Activated T-helper 2 cell treated with anti-CD3 and anti-CD28 coated beads, Interferon-gamma antibody, Interleukin-2, Interleukin-4, amounts not matched to agents 10 μg/mL and 5 μg/mL and 100 μg/mL, durations not matched to agents 14 hours and 24 hours and 36 hours (primary cell): ENCODE measurements at regions of chr17 and their contacts with region 1.

Region 1: DNA sequence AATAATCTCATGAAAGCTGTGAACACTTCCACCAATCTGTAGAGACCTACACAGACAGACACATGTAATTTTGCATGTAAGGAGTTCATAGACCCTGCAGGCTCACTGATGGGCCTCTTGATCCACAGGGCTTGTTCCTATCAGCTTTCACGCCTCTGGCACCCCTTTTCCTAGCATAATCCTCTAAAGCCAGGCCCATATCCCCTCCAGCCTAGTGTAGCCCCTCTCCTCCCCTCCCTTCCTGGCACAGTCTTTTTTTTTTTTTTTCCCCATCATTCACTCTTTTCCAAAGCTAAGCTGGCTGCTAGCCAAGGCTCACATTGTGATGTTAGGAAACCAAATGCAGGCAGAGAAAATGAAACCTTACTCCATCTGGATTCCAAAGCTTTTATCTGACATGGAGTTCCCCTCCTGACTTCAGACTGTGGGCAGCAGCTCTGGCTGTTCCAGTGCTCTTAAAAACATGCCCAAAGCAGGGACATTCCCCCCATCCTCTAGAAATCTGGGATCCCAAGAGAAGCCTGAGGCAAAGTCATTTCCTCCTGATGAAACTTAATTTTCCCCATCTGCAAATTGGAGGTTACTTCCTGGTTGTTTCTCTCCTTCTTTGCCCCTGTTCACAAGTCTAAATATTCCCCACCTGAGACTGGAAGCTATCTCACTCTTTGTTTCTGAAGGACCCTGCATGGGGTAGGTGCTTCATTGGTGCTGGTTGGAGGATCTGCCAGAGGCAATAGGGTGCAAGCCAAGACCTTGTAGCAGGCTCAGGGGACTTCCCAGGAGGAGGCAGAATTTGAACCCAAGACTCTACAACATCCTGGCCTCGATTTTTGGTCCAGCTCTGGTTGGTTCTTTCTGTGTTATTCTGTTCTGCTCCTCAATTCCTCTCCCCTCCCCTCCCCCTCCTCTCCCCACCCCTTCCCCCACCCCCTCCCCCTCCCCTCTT is 9.9 kb upstream of the CCL5 start:
- DNase-seq: no peak
- H3K4me3 Mint-ChIP-seq: no peak overlapping the region
- H3K27ac Mint-ChIP-seq: peak overlapping the region; percentile 51
- H3K4me1 Mint-ChIP-seq: peaks cover 42% of the 10 kb centered on the region
- H3K27me3 Mint-ChIP-seq: no peaks in the 10 kb centered on the region

Region 2: DNA sequence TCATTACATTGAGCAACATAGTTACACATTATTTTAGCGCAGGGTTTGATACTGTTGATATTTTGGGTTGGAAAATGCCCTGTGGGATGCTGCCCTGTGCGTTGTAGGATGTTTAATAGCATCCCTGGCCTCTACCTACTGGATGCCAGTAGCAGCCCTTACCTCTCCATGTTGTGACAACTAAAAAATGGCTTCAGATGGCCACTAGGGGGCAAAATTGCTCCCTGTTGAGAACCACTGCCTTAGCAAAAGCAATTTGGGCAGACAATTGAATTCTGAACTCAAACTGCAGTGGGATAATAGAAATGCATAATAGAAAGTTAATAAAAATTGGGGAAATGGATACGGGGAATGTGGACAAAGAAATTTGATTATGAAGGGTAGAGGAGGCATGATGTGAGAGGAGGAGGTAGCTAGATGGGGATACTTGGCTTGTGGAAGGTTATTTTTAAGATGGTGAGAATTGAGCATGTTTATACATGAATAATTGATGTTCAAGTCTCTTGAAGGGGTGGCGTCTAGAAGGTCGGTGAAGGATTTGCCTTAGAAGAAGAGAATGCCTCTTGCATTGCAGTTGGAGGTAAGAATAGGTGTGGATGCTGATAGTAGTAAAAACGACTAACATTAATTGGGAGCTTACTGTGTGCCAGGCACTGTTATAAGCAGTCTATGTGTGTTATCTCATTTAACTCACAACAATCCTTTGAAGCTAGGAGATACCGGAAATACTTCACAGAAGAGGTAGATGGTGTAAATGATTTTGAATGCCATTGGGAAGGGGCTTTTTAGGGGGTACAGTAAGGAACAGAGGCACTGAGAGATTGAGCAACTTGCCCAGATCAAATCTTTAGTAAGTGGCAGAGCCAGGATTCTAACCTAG is 40.4 kb before region 1 on chr17:
- intact Hi-C with region 1: loop called (anchors 5 kb)
- DNase-seq: peak; percentile 48
- H3K4me3 Mint-ChIP-seq: no peak overlapping the region
- H3K27ac Mint-ChIP-seq: peak overlapping the region; percentile 6
- H3K4me1 Mint-ChIP-seq: peaks cover 7% of the 10 kb centered on the region
- H3K27me3 Mint-ChIP-seq: no peaks in the 10 kb centered on the region

Region 3: GRCh38 chr17:35879773-35880654 is 10.1 kb before region 1 on chr17 and contains the start of gene CCL5:
- intact Hi-C with region 1: loop called (anchors 1 kb)
- DNase-seq: peak; percentile 59
- H3K4me3 Mint-ChIP-seq: peak within 1 kb of the TSS; percentile 76
- H3K27ac Mint-ChIP-seq: peak within 1 kb of the TSS; percentile 97
- H3K4me1 Mint-ChIP-seq: peaks cover 49% of the 10 kb centered on the region
- H3K27me3 Mint-ChIP-seq: no peaks in the 10 kb centered on the region
- total RNA-seq, gene CCL5: 28.1 and 28.9 TPM in 2 replicates

Region 4: GRCh38 chr17:35947156-35947585 is 57.1 kb after region 1 on chr17:
- intact Hi-C with region 1: no loop called
- DNase-seq: peak; percentile 27
- H3K4me3 Mint-ChIP-seq: no peak overlapping the region
- H3K27ac Mint-ChIP-seq: no peak overlapping the region
- H3K4me1 Mint-ChIP-seq: no peaks in the 10 kb centered on the region
- H3K27me3 Mint-ChIP-seq: no peaks in the 10 kb centered on the region